Activated CD4-positive, alpha-beta memory T cell treated with anti-CD3 and anti-CD28 coated beads for 36 hours (primary cell): ENCODE measurements at regions of chr4 and their contacts with region 1.

Region 1: DNA sequence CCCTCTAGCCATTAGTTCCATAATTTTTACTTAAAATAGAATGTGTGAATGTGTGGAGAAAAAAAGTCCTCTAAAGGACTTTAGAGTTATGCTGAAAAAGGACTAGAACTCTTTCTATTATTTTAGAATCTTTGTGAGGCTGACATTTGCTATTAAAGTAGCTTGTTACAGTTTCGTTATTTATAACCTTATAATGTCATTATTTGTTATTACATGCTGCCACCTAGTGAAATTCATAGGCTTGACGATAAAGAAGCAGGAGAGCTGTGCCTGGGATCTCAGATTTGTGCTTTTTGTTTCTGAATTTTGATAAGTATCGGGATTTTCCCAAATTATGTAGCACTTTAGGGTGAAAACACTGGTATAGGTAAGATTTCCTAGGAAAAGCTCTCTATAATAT is 38.5 kb upstream of the TAPT1 start:
- DNase-seq: no peak
- H3K4me3 Mint-ChIP-seq: no peak overlapping the region
- H3K27ac Mint-ChIP-seq: no peak overlapping the region
- H3K4me1 Mint-ChIP-seq: peaks cover 25% of the 10 kb centered on the region
- H3K27me3 Mint-ChIP-seq: no peaks in the 10 kb centered on the region

Region 2: DNA sequence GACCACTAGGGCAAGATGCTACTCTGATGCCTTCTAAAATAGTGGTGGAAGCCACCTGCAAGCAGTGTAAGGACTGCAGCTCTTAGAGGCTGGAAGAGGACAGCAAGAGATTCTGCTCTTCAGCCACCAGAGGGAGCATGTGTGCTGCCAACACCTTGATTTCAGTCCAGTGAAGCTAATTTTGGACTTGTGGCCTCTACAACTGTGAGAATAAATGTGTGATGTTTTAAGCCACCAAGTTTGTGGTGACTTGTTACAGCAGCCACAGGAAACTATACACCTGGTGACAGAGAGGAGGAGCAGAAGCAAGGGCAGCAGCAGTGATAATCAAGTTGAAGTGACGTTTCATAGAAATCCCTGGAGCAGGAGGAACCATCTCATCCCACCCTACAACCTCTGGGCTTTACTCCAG is 382.1 kb before region 1 on chr4:
- CTCF ChIA-PET with region 1: interaction called, 21 read pairs
- POLR2A ChIA-PET with region 1: no interaction called
- intact Hi-C with region 1: loop called (anchors 5 kb)
- DNase-seq: peak; percentile 48
- H3K4me3 Mint-ChIP-seq: no peak overlapping the region
- H3K27ac Mint-ChIP-seq: no peak overlapping the region
- H3K4me1 Mint-ChIP-seq: no peaks in the 10 kb centered on the region
- H3K27me3 Mint-ChIP-seq: peaks cover 5% of the 10 kb centered on the region

Region 3: GRCh38 chr4:16001484-16001858 is 263.3 kb before region 1 on chr4:
- CTCF ChIA-PET with region 1: interaction called, 12 read pairs
- POLR2A ChIA-PET with region 1: no interaction called
- intact Hi-C with region 1: no loop called
- DNase-seq: peak; percentile 58
- H3K4me3 Mint-ChIP-seq: no peak overlapping the region
- H3K27ac Mint-ChIP-seq: no peak overlapping the region
- H3K4me1 Mint-ChIP-seq: no peaks in the 10 kb centered on the region
- H3K27me3 Mint-ChIP-seq: peaks cover 6% of the 10 kb centered on the region

Region 4: DNA sequence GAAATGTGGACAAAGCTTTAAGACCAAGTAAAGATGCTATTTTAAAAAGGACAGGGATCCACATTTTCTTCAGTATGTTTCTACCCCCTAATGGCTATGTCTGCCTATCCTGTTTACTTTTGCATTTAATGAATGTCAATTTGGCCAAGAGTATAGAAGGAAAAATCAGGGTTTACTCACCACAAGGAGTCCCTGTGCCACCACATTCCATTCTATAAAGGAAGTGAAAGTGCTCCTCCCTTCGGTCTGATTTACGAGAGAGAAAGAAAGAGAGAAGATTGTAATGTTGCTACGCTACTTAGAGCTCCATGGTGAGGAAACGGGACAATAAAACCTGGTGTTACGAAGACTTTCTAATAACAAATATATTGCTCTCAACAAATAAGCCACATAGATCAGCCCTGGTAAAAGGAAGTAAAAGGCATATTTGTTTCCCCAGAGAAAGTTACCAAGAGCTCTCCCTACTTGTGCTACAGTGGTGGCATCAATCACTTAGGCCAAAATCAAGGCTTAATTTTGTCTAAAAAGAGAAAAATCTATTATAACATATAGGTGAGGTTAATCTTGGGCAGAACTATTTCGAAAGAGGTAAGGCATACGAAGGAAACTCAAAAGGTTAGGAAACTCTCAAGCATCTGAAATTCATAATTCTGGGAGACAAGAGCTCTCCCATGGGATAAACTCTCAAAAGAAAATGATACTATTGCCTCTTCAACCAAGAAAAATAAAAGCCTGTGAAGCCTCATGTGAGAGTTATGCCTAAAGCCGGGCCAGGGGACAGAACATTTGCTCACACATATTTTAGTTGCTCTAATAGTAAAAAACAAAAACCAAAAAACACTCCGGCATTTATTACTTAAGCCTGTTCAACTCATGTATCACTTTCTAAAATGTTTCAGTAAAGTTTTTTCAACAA is 68.1 kb before region 1 on chr4:
- CTCF ChIA-PET with region 1: interaction called, 13 read pairs
- POLR2A ChIA-PET with region 1: no interaction called
- intact Hi-C with region 1: no loop called
- DNase-seq: no peak
- H3K4me3 Mint-ChIP-seq: no peak overlapping the region
- H3K27ac Mint-ChIP-seq: no peak overlapping the region
- H3K4me1 Mint-ChIP-seq: peaks cover 16% of the 10 kb centered on the region
- H3K27me3 Mint-ChIP-seq: no peaks in the 10 kb centered on the region

Region 5: DNA sequence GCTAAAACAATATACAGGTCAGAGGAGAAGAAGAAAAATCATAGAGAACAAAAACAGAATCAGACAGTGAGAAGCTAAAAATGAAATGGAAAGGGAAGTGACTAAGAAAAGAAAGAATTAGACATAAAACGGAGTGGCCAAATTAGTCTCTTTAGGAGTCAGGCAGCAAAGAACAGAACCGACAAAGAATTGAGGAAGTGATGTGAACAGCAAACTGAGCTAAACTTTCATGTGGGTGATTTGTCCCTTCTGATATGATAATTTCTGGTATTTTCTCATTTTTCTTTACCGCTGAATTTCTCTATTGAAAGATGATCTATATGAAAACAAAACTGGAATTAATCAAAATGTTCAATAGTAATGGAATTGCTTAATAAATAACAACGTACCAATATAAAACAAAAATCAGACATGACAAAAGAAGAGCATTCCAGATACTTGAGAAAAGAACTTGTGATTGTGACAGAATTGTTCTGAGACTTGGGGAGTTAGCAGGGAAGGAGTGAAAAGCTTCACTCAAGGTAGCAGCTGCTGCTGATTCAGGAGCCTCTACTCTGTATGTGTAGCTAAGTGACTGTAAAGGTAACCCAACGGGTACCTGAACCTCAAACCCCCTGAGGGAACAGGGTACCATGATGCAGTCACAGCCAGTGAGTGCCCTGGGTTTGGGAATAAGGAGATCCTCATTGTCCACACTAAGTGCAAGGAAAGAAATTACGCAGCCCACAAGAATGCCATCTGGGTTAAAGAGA is 47.3 kb before region 1 on chr4:
- CTCF ChIA-PET with region 1: interaction called, 10 read pairs
- POLR2A ChIA-PET with region 1: no interaction called
- intact Hi-C with region 1: no loop called
- DNase-seq: no peak
- H3K4me3 Mint-ChIP-seq: peak overlapping the region; percentile 13
- H3K27ac Mint-ChIP-seq: peak overlapping the region; percentile 47
- H3K4me1 Mint-ChIP-seq: peaks cover 69% of the 10 kb centered on the region
- H3K27me3 Mint-ChIP-seq: no peaks in the 10 kb centered on the region